ENCODE measurements at regions of chr4 and their contacts with region 1.

Region 1: GRCh38 chr4:2418650-2419571 is at the start of gene CFAP99:
- DNase-seq: peak; percentile 99
- H3K4me3 ChIP-seq: peak within 1 kb of the TSS; percentile 65 to 80 (median 71)
- H3K27ac ChIP-seq: peak within 1 kb of the TSS; percentile 43 to 80 (median 76)
- H3K4me1 ChIP-seq: peaks cover 21 to 40% (median 36%) of the 10 kb centered on the region in 4 donors
- H3K27me3 ChIP-seq: peaks cover 0 to 72% (median 11%) of the 10 kb centered on the region in 3 donors
- CTCF ChIP-seq: peak in 1 of 7 experiments; percentile 20
- EP300 ChIP-seq: no peak
- POLR2A ChIP-seq: no peak
- total RNA-seq, gene CFAP99: 0.45 to 1.4 (median 0.92) TPM in 3 of 5 donors, not detected in the others

Region 2: DNA sequence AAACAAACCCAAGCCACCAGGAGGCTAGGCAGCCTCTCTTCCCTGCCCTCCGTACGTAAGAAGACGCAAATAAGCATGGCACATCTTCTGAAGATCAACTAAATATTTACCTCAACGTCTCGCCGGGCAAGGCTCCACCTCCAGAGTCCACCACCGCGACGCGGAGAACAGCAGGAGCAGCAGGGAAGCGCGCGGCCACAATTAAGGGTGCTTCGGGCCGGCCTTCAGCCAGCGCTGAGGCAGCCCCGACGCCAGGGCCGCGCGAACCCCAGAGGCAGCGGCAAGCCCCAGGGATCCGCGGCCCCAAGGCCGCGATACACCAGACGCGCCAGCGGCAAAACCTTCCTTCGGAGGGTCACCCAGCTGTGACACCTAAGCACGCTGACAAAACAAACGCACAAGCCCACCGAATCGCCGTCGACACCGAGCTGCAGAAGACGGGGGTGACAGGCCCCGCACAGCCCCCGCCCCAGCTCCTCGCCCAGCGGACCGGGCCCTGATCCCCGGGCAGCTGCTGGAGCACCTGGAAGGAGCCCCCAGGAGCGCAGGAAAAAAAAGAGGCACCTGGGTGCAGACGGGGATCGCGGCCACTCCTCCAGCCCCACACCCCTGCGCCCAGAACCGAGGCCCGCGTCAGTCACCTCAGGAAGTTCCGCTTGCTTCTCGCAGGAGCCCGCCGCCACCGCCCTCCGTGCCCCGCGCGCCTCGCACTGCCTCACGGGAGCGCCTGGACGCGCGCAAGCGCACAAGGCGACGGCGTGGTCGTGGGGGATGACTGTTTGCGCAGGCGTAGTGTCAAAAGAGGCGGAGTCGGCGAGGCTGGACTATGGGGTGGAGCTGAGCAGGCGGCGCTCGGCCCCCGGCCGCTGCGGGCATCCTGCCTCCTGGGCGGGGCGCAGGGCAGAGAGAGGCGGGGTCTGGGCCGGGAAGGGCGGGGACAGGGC is 177.2 kb before region 1 on chr4 and contains the starts of genes HAUS3 and POLN:
- intact Hi-C with region 1: loop called (anchors 10 kb)
- DNase-seq: peak; percentile 99
- H3K4me3 ChIP-seq: peak within 1 kb of the TSS; percentile 69 to 97 (median 93)
- H3K27ac ChIP-seq: peak within 1 kb of the TSS; percentile 83 to 89 (median 86)
- H3K4me1 ChIP-seq: peaks cover 14 to 91% (median 51%) of the 10 kb centered on the region in 4 donors
- H3K27me3 ChIP-seq: no peaks in the 10 kb centered on the region
- CTCF ChIP-seq: no peak
- EP300 ChIP-seq: no peak
- POLR2A ChIP-seq: peak in 1 of 4 donors; percentile 48
- total RNA-seq, gene HAUS3: 7.6 to 37.4 (median 17.5) TPM
- total RNA-seq, gene POLN: 0.29 to 5.1 (median 1.4) TPM in 3 of 5 donors, not detected in the others

Region 3: GRCh38 chr4:2269206-2269531 is 149.7 kb before region 1 on chr4:
- intact Hi-C with region 1: no loop called
- DNase-seq: no peak
- H3K4me3 ChIP-seq: no peak overlapping the region
- H3K27ac ChIP-seq: no peak overlapping the region
- H3K4me1 ChIP-seq: peaks cover 11 to 30% (median 25%) of the 10 kb centered on the region in 4 donors
- H3K27me3 ChIP-seq: no peaks in the 10 kb centered on the region
- CTCF ChIP-seq: no peak
- EP300 ChIP-seq: no peak
- POLR2A ChIP-seq: no peak

Region 4: GRCh38 chr4:2290974-2291704 is 127.8 kb before region 1 on chr4:
- intact Hi-C with region 1: no loop called
- DNase-seq: peak; percentile 37 to 64
- H3K4me3 ChIP-seq: no peak overlapping the region
- H3K27ac ChIP-seq: peak overlapping the region in 1 of 5 donors; percentile 34
- H3K4me1 ChIP-seq: peaks cover 0 to 11% (median 5%) of the 10 kb centered on the region in 4 donors
- H3K27me3 ChIP-seq: no peaks in the 10 kb centered on the region
- CTCF ChIP-seq: no peak
- EP300 ChIP-seq: no peak
- POLR2A ChIP-seq: no peak

Region 5: GRCh38 chr4:2647403-2648158 is 228.7 kb after region 1 on chr4:
- intact Hi-C with region 1: no loop called
- DNase-seq: no peak
- H3K4me3 ChIP-seq: no peak overlapping the region
- H3K27ac ChIP-seq: no peak overlapping the region
- H3K4me1 ChIP-seq: no peaks in the 10 kb centered on the region
- H3K27me3 ChIP-seq: no peaks in the 10 kb centered on the region
- CTCF ChIP-seq: no peak
- EP300 ChIP-seq: no peak
- POLR2A ChIP-seq: no peak

Measured in stomach (tissue), 19 donors.